A549 (cell line): ENCODE measurements at regions of chr1 and their contacts with region 1.

Region 1: DNA sequence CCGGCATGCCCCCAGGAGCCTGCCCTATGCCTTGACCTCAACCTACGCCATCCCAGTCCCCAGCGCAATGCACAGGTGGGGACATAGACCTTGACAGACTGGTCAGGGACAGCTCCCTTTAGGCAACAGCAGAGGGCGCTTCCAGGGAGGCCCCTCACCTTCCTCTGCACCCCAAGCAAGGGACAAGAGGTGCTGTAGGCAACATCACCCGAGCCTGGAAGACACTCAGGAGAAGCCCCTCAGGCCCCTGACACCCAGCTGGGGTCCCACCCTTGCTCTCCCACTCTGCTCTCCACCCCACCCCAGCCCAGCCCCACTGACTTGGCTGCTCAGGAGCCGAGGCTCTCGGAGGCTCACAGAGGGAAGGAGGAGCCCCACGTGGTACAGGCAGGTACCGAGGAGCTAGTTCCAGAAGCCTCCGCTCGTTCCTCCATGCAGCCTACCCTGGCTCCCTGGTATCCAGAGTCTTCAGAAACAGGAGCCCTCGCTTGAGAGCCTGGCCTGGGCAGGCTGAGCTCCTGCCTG is 2.4 kb upstream of the WNT3A start:
- DNase-seq: peak; percentile 54 to 62
- ATAC-seq: peak; percentile 45 to 76; a peak in 4 of 6 replicates
- H3K4me3 ChIP-seq: no peak overlapping the region
- H3K27ac ChIP-seq: no peak overlapping the region
- H3K4me1 ChIP-seq: peaks cover 4% of the 10 kb centered on the region; the same call in 1 of the 3 replicates
- CTCF ChIP-seq: peak; percentile 51; the same call in 2 of the 3 replicates
- EP300 ChIP-seq: no peak
- POLR2A ChIP-seq: no peak
- RAD21 ChIP-seq: peak; percentile 48 to 52

Region 2: DNA sequence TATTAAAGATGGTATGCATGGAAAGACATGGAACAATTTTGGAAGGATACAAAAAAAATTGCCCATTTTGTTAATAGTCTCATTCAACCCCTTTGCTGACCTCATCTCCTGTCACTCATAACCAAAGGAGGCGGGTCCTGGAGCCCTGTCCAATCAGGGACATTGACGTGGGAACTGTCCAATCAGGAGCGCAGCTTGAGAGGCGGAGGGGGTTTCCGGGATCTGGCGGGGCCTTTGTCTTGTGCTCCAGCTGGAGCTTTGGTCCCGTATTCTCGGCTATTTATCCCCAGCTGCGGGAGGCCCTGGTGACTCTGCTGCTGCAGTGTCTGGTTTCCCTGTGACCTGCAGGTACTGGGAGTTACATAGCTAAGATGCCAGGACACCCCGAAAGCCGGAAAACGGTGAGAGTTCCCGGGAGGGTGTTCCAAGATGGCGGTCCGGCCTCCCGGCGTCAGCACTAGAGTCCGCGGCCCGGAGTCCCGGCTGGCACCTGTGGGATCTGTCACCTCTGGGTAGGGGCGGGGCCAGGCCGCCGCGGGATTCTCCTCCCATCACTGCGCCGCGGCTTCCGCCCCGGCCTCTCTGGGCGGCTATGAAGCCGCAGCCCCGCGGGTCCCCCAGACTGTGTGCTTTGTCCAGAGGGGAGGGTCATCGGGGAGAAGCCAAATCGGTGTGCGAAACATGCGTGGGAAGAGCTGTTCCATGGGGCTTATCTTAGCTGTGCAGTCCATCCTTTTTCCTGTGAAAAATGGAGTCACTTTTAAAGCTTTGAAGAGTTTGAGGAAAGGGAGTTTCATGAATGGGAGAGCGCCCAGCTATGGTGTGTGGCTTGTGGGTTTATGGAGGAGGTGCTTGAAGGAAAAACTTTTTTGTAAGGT is 440.8 kb before region 1 on chr1 and contains the start of gene ZNF678:
- CTCF ChIA-PET with region 1: no interaction called
- POLR2A ChIA-PET with region 1: no interaction called
- DNase-seq: peak; percentile 97 to 99
- ATAC-seq: peak; percentile 98
- H3K4me3 ChIP-seq: peak within 1 kb of the TSS; percentile 61
- H3K27ac ChIP-seq: peak within 1 kb of the TSS; percentile 93
- H3K4me1 ChIP-seq: no peaks in the 10 kb centered on the region
- CTCF ChIP-seq: no peak
- EP300 ChIP-seq: no peak
- POLR2A ChIP-seq: peak; percentile 78
- RAD21 ChIP-seq: no peak
- polyA plus RNA-seq, gene ZNF678: 6.5 and 6.9 TPM in 2 replicates

Region 3: DNA sequence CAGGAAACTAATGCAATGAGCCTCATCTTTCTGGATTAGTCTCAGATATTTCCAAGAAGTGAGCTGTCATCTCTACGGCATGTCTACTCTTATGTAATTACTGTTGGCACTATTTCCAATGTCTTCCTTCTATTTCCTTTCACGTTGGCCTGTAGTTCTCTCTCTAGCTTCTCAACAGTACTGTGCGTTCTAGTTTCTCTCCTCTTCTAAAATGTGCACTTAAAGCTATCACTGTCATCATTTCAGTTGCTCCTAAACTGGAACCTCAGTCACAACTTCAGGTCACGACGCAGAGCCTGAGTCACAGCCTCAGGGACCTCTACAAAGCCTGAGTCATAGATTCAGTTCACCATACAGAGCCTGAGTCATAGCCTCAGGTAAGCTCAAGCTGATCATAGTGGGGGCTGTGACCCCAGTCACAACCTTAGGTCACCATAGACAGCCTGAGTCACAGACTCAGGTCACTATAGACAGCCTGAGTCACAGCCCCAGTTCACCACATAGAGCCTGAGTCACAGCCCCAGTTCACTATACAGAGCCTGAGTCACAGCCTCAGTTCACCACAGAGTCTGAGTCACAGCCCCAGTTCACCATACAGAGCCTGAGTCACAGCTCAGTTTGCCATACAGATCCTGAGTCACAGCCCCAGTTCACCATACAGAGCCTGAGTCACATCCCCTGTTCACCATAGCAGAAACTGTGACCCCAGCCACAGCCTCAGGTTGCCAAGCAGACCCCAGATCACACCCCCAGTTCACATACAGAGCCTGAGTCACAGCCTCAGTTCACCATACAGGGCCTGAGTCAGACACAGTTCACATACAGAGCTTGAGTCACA is 69.7 kb before region 1 on chr1:
- CTCF ChIA-PET with region 1: no interaction called
- POLR2A ChIA-PET with region 1: no interaction called
- DNase-seq: peak; percentile 49 to 91
- ATAC-seq: peak; percentile 97 to 99
- H3K4me3 ChIP-seq: no peak overlapping the region
- H3K27ac ChIP-seq: peak overlapping the region in 1 of 2 experiments; percentile 55; a peak in 3 of 6 replicates
- H3K4me1 ChIP-seq: no peaks in the 10 kb centered on the region; the same call in 2 of the 3 replicates
- CTCF ChIP-seq: no peak
- EP300 ChIP-seq: peak in 1 of 2 experiments; percentile 16; a peak in 1 of 5 replicates
- POLR2A ChIP-seq: no peak
- RAD21 ChIP-seq: no peak

Region 4: GRCh38 chr1:227946624-227947385 is 57.6 kb before region 1 on chr1:
- CTCF ChIA-PET with region 1: no interaction called
- POLR2A ChIA-PET with region 1: no interaction called
- DNase-seq: peak; percentile 80 to 86
- ATAC-seq: peak; percentile 76 to 93
- H3K4me3 ChIP-seq: peak overlapping the region; percentile 66
- H3K27ac ChIP-seq: peak overlapping the region; percentile 67 to 89
- H3K4me1 ChIP-seq: peaks cover 12% of the 10 kb centered on the region
- CTCF ChIP-seq: peak; percentile 95
- EP300 ChIP-seq: no peak
- POLR2A ChIP-seq: no peak
- RAD21 ChIP-seq: peak; percentile 90 to 98

Region 5: GRCh38 chr1:228059634-228060457 is 55.5 kb after region 1 on chr1:
- CTCF ChIA-PET with region 1: interaction called, 25 read pairs
- POLR2A ChIA-PET with region 1: no interaction called
- DNase-seq: peak; percentile 73 to 88
- ATAC-seq: peak; percentile 69 to 84
- H3K4me3 ChIP-seq: peak overlapping the region; percentile 59
- H3K27ac ChIP-seq: peak overlapping the region; percentile 64 to 84
- H3K4me1 ChIP-seq: peaks cover 12% of the 10 kb centered on the region; the same call in 2 of the 3 replicates
- CTCF ChIP-seq: no peak
- EP300 ChIP-seq: no peak
- POLR2A ChIP-seq: 0 out of 2 replicates have a peak, but pooled peaks have one; percentile 11
- RAD21 ChIP-seq: no peak

Region 6: GRCh38 chr1:228073857-228074545 is 69.6 kb after region 1 on chr1:
- CTCF ChIA-PET with region 1: interaction called, 13 read pairs
- POLR2A ChIA-PET with region 1: no interaction called
- DNase-seq: no peak
- ATAC-seq: peak in 1 of 2 experiments; percentile 48; a peak in 3 of 6 replicates
- H3K4me3 ChIP-seq: no peak overlapping the region
- H3K27ac ChIP-seq: no peak overlapping the region
- H3K4me1 ChIP-seq: no peaks in the 10 kb centered on the region
- CTCF ChIP-seq: peak; percentile 21; the same call in 1 of the 3 replicates
- EP300 ChIP-seq: no peak
- POLR2A ChIP-seq: no peak
- RAD21 ChIP-seq: peak; percentile 46 to 62; a peak in 4 of 5 replicates

Region 7: DNA sequence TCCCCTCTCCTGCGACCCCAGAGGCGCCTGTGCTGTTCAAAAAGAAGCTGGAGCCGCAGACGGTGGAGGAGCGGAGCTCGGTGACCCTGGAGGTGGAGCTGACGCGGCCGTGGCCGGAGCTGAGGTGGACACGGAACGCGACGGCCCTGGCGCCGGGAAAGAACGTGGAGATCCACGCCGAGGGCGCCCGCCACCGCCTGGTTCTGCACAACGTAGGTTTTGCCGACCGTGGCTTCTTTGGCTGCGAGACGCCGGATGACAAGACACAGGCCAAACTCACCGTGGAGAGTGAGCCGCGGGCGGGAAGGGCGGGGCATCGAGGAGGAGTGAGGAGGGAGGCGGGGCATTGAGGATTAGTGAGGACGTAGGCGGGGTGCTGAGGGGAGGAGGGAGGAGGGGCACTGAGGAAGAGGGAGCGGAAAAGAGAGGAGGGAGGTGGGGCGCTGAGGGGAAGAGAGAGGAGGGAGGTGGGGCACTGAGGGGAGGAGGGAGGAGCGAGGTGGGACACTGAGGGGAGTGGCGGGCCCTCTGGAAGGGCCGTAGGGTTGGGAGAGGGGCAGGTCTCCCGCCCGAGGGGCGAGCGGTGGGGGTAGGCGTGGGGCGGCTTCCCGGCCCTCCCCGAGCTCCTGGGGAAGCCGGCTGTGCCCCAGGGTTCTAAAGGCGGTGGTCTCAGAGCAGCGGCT is 271.5 kb after region 1 on chr1:
- CTCF ChIA-PET with region 1: no interaction called
- POLR2A ChIA-PET with region 1: no interaction called
- DNase-seq: no peak
- ATAC-seq: no peak
- H3K4me3 ChIP-seq: no peak overlapping the region
- H3K27ac ChIP-seq: no peak overlapping the region
- H3K4me1 ChIP-seq: no peaks in the 10 kb centered on the region
- CTCF ChIP-seq: no peak
- EP300 ChIP-seq: no peak
- POLR2A ChIP-seq: no peak
- RAD21 ChIP-seq: no peak